A549 (cell line): ENCODE measurements at regions of chr17 and their contacts with region 1.

Region 1: DNA sequence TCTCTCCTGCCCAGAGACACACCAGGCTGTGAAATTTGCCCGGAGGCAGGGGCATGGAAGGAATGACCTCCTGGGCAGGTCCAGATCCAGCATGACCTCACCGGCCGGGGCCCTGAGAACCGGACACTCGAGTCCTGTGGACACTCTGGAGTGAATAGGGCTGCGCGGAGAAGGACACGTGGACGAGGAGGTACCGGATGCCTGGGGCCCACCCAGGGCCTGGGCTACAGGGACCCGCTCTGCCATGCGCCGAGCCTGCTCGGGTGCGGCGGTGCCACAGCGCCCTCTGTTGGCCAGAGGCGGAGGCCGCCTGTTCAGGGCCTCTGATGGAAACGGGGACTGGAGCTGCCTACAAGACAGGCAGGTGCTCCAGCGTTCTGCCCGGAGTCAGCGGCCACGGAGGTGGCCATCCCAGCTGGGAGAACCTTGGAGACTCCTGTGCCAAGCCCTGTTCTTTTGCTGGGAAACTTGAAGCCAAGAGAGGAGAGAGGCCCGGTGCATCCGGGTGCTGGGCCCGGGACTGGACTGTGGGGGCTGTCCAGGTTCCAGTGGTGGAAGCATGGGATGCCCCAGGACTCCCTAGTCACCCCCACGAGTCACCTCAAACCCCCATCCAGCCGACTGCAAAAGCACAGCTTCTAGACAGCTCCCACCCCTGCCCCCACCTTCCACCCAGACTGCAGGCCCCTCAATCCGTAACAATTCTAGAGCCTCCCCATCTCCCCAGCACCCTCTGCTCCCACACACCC is 19.3 kb upstream of the NXPH3 start:
- DNase-seq: peak; percentile 82 to 94
- ATAC-seq: peak; percentile 89 to 98
- H3K4me3 ChIP-seq: no peak overlapping the region
- H3K27ac ChIP-seq: peak overlapping the region; percentile 46 to 64
- H3K4me1 ChIP-seq: 0 out of 3 replicates have a peak, but pooled peaks cover 3% of the 10 kb centered on the region
- CTCF ChIP-seq: peak; percentile 99
- EP300 ChIP-seq: no peak
- POLR2A ChIP-seq: no peak; the same call in 1 of the 2 replicates
- RAD21 ChIP-seq: peak; percentile 97 to 98

Region 2: DNA sequence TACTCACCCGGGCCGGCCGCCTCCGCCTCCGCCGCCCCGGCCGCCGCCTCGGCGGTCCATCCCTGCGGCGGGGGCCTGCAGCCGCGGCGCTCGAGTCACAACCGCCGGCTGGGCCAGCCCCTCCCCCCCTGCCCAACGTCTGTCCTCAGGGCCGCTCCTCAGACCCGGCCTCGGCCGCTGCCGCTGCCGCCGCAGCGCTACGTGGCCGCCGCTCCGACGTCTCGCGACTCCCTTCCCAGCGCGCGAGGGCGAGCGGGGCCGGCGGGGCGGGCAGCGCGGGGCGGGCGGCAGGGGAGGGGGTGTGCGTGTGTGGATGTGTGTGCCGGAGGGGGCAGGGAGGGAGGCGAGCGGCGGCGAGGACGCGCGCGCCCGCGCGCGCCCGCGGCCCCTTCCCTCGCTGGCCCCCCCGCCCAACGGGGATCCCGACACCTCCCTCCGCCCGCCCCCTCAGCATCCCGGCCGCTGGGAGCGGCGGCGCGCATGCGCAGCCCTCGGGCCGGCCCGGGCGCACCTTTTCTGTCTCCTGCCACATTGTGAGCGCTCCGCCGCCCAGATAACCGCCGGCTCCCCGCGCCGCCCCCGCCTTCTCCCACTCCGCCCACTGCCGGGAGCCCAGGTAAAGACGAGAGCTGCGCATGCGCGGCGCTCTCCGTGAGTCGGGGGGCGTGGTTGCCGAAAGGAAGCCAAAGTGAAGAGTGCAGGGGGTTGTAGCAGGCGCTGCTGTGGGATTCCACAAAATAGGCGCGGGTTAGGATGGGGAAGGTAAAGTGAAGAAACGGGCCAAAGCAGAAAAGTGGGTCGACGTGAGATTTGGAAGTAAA is 194.3 kb before region 1 on chr17 and contains the start of gene ZNF652:
- CTCF ChIA-PET with region 1: interaction called, 10 read pairs
- POLR2A ChIA-PET with region 1: no interaction called
- DNase-seq: peak; percentile 96 to 97
- ATAC-seq: peak; percentile 80 to 81
- H3K4me3 ChIP-seq: peak within 1 kb of the TSS; percentile 94
- H3K27ac ChIP-seq: peak within 1 kb of the TSS; percentile 87 to 96
- H3K4me1 ChIP-seq: peaks cover 28% of the 10 kb centered on the region
- CTCF ChIP-seq: no peak
- EP300 ChIP-seq: no peak; a peak in 1 of 5 replicates
- POLR2A ChIP-seq: peak; percentile 39
- RAD21 ChIP-seq: no peak
- polyA plus RNA-seq, gene ZNF652: 13.1 and 14.8 TPM in 2 replicates

Region 3: GRCh38 chr17:49434821-49435670 is 121.4 kb before region 1 on chr17:
- CTCF ChIA-PET with region 1: interaction called, 317 read pairs
- POLR2A ChIA-PET with region 1: no interaction called
- DNase-seq: peak; percentile 73 to 95
- ATAC-seq: peak; percentile 72 to 91
- H3K4me3 ChIP-seq: no peak overlapping the region
- H3K27ac ChIP-seq: no peak overlapping the region
- H3K4me1 ChIP-seq: no peaks in the 10 kb centered on the region
- CTCF ChIP-seq: peak; percentile 83
- EP300 ChIP-seq: no peak
- POLR2A ChIP-seq: no peak
- RAD21 ChIP-seq: peak; percentile 80 to 82

Region 4: DNA sequence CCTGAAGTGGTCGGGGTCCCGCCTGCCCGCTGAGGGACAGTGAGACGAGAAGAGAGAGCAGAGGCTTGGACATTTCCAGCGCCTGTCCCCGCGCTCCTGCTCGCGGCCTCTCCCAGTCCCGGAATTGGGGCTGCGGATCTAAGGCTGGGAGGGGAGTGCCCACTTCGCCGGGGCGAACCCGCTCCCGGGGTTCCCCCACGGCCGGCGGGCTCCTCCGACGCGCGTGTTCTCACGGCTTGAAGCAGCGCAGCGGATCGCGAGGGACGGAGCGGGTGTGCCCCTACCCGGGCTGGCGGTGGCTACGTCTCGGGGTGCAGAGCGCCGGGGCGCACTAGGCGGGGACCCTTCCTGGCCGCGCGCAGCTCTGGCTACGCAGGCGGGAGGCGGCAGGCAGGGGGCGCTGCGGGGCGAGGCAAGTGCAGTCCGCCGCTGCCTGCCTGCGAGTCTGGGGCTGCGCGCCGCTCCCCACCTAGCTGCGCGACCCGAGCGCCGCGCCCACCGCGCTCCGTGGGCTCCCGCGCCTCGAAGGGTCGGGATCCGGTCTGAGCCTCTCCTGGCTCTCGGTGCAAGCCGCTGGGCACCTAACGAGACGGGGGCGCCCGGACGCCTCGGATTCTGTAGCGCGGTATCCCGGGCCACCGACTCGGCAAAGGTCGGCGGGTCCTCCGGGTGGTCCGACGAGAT is 60.1 kb before region 1 on chr17:
- CTCF ChIA-PET with region 1: interaction called, 157 read pairs
- POLR2A ChIA-PET with region 1: no interaction called
- DNase-seq: peak; percentile 72 to 83
- ATAC-seq: peak; percentile 73 to 92
- H3K4me3 ChIP-seq: peak overlapping the region; percentile 50
- H3K27ac ChIP-seq: peak overlapping the region in 1 of 2 experiments; percentile 47; a peak in 1 of 6 replicates
- H3K4me1 ChIP-seq: peaks cover 22% of the 10 kb centered on the region
- CTCF ChIP-seq: peak; percentile 95
- EP300 ChIP-seq: no peak
- POLR2A ChIP-seq: no peak
- RAD21 ChIP-seq: peak; percentile 39 to 67; a peak in 4 of 5 replicates

Region 5: DNA sequence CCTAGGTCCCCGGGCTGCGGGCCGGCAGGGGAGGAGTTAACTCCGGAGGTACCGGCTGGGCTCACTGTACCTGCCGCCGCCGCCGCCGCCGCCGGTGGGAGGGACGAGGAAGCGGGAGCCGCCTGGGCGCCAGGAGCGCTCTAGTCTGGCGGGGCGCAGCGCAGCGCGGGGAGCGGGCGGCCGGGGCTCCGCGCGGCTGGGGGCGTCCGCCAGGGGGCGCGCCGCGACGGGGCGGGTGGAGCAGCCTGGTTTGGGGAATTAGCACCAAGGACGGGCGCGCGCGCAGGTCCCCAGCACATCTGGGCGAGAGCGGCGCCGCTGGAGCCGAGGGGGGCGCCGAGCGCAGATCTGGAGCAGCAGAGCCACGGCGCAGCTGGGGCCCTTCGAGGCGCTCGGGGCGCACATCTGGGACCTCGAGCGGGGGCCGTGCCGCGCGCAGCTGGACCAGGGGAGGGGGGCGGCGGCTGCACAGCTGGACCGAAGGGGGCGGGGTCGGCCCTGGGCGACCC is 19.2 kb after region 1 on chr17 and contains the start of gene NXPH3:
- CTCF ChIA-PET with region 1: interaction called, 258 read pairs
- POLR2A ChIA-PET with region 1: no interaction called
- DNase-seq: peak; percentile 64 to 79
- ATAC-seq: peak; percentile 50 to 78
- H3K4me3 ChIP-seq: peak within 1 kb of the TSS; percentile 53
- H3K27ac ChIP-seq: peak within 1 kb of the TSS; percentile 48 to 73; a peak in 5 of 6 replicates
- H3K4me1 ChIP-seq: peaks cover 4% of the 10 kb centered on the region; the same call in 1 of the 3 replicates
- CTCF ChIP-seq: peak; percentile 96
- EP300 ChIP-seq: no peak
- POLR2A ChIP-seq: no peak
- RAD21 ChIP-seq: peak; percentile 10 to 70; a peak in 3 of 5 replicates
- polyA plus RNA-seq, gene NXPH3: 0.07 and 0.12 TPM in 2 replicates

Region 6: GRCh38 chr17:49730078-49730784 is 173.8 kb after region 1 on chr17:
- CTCF ChIA-PET with region 1: interaction called, 2,008 read pairs
- POLR2A ChIA-PET with region 1: no interaction called
- DNase-seq: no peak
- ATAC-seq: no peak; a peak in 1 of 6 replicates
- H3K4me3 ChIP-seq: no peak overlapping the region
- H3K27ac ChIP-seq: no peak overlapping the region
- H3K4me1 ChIP-seq: no peaks in the 10 kb centered on the region
- CTCF ChIP-seq: no peak
- EP300 ChIP-seq: no peak
- POLR2A ChIP-seq: no peak
- RAD21 ChIP-seq: no peak

Region 7: GRCh38 chr17:49997791-49998703 is 441.6 kb after region 1 on chr17:
- CTCF ChIA-PET with region 1: interaction called, 30 read pairs
- POLR2A ChIA-PET with region 1: no interaction called
- DNase-seq: peak; percentile 92 to 95
- ATAC-seq: peak; percentile 73 to 88
- H3K4me3 ChIP-seq: no peak overlapping the region
- H3K27ac ChIP-seq: peak overlapping the region; percentile 54 to 71
- H3K4me1 ChIP-seq: peaks cover 29% of the 10 kb centered on the region
- CTCF ChIP-seq: peak; percentile 99
- EP300 ChIP-seq: no peak
- POLR2A ChIP-seq: no peak
- RAD21 ChIP-seq: peak; percentile 99

Region 8: DNA sequence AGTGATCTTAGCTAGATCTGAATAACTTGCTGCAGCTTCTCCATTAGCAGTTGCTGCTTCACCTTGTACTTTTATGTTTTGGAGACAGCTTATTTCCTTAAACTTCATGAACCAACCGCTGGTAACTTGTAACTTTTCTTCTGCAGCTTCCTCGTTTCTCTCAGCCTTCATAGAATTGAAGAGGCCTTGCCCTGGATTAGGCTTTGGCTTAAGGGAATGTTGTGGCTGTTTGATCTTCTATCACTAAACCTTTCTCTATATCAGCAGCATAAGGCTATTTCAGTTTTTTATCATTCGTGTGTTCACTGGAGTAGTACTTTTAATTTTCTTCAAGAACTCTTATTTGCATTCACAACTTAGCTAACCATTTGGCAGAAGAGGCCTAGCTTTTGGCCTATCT is 696.4 kb after region 1 on chr17:
- CTCF ChIA-PET with region 1: no interaction called
- POLR2A ChIA-PET with region 1: no interaction called
- DNase-seq: no peak
- ATAC-seq: no peak
- H3K4me3 ChIP-seq: no peak overlapping the region
- H3K27ac ChIP-seq: no peak overlapping the region
- H3K4me1 ChIP-seq: 0 out of 3 replicates have a peak, but pooled peaks cover 3% of the 10 kb centered on the region
- CTCF ChIP-seq: no peak
- EP300 ChIP-seq: no peak
- POLR2A ChIP-seq: no peak
- RAD21 ChIP-seq: no peak